Heart left ventricle (tissue), 16 donors: ENCODE measurements at regions of chr6 and their contacts with region 1.

Region 1: GRCh38 chr6:73180763-73181619 is 44.3 kb downstream of the KHDC1L start:
- DNase-seq: no peak
- ATAC-seq: peak in 3 of 4 donors; percentile 75 to 86 (median 84)
- H3K4me3 ChIP-seq: peak overlapping the region in 8 of 12 donors; percentile 4 to 49 (median 26)
- H3K27ac ChIP-seq: no peak overlapping the region
- H3K4me1 ChIP-seq: peaks cover 0 to 5% (median 0%) of the 10 kb centered on the region in 12 donors
- H3K27me3 ChIP-seq: peaks cover 0 to 11% (median 3%) of the 10 kb centered on the region in 9 donors
- CTCF ChIP-seq: peak; percentile 56 to 83 (median 68)
- POLR2A ChIP-seq: no peak

Region 2: DNA sequence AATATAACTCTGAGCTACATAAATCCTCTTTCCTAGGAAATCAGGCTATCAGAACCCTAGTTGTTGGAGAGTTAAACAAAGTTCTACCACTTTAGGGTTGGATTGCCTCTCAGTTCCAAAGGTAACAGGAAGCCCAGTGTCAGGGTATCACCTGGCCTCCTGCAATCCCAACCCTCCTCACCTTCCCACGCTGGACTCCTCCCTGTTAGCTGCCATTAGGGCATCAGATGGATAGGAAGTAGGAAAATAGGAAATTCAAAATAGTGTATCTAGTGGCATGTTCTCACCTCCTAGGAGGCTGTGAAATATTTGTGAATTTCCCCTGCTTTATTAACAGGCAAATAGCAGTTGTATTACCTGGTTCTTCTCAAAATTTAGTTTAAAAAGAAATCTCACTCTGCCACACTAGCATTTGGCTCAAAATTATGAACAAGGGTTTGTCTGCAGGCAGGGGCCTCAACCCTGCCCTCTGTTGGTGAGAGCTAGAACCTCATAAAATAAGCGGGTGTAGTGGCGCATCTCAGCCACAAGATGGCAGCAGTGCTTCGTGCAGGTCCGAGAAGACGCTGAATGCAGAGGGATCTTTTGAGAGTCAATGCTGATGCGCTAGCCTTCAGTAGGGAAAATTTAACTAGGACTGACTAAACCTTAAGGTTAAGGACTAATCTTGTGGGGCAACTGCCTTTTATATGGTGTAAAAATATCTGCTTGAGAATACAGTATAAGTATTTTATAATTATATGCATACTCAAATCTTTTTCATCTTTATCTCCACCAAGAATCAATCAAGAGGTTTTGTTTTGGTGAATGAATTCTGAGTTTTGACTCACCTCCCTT is 768.9 kb before region 1 on chr6:
- intact Hi-C with region 1: loop called (anchors 2 to 5 kb)
- DNase-seq: peak; percentile 37 to 73 (median 59)
- ATAC-seq: peak in 3 of 4 donors; percentile 68 to 87 (median 80)
- H3K4me3 ChIP-seq: no peak overlapping the region
- H3K27ac ChIP-seq: no peak overlapping the region
- H3K4me1 ChIP-seq: no peaks in the 10 kb centered on the region
- H3K27me3 ChIP-seq: peaks cover 0 to 21% (median 6%) of the 10 kb centered on the region in 9 donors
- CTCF ChIP-seq: peak; percentile 100
- POLR2A ChIP-seq: no peak